ENCODE measurements at regions of chr7 and their contacts with region 1.

Region 1: DNA sequence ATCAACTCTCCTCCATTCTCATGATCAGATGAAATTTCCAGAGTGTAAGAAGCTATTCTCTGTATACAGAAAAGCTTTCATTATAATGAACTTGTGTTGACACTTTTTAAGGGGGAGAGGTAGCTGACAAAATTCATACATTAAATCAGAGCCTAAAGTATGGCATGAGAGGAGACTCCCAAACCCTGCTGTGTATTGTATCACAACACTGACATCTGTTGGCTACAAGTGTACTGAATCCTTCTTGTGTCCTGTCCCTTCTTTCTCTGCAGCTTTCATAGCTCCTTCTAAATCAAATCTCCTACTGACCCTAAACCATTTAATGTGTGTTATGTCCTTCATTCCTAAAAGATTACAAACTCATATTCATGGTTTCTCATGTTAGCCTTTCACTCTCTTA is 70.9 kb downstream of the GCC1 start:
- DNase-seq: peak in 4 of 14 experiments; percentile 12 to 71 (median 58)
- ATAC-seq: peak; percentile 68
- H3K4me3 ChIP-seq: no peak overlapping the region
- H3K4me3 Mint-ChIP-seq: no peak overlapping the region
- H3K27ac ChIP-seq: no peak overlapping the region
- H3K27ac Mint-ChIP-seq: no peak overlapping the region
- H3K4me1 ChIP-seq: no peaks in the 10 kb centered on the region
- H3K4me1 Mint-ChIP-seq: no peaks in the 10 kb centered on the region
- H3K27me3 ChIP-seq: peaks cover 0 to 5% of the 10 kb centered on the region in 2 experiments
- H3K27me3 Mint-ChIP-seq: peaks cover 37% of the 10 kb centered on the region
- CTCF ChIP-seq: peak; percentile 60

Region 2: GRCh38 chr7:126803060-126803665 is 711.3 kb before region 1 on chr7:
- CTCF ChIA-PET with region 1: interaction called, 3 read pairs
- POLR2A ChIA-PET with region 1: no interaction called
- intact Hi-C with region 1: loop called in 1 of 2 experiments (anchors 2 kb)
- DNase-seq: peak in 7 of 14 experiments; percentile 0 to 50 (median 15)
- ATAC-seq: peak; percentile 29
- H3K4me3 ChIP-seq: no peak overlapping the region
- H3K4me3 Mint-ChIP-seq: no peak overlapping the region
- H3K27ac ChIP-seq: no peak overlapping the region
- H3K27ac Mint-ChIP-seq: no peak overlapping the region
- H3K4me1 ChIP-seq: no peaks in the 10 kb centered on the region
- H3K4me1 Mint-ChIP-seq: no peaks in the 10 kb centered on the region
- H3K27me3 ChIP-seq: peaks cover 0 to 6% of the 10 kb centered on the region in 2 experiments
- H3K27me3 Mint-ChIP-seq: peaks cover 26% of the 10 kb centered on the region
- CTCF ChIP-seq: peak; percentile 57

Region 3: GRCh38 chr7:127253281-127254162 is 261.0 kb before region 1 on chr7:
- CTCF ChIA-PET with region 1: no interaction called
- POLR2A ChIA-PET with region 1: no interaction called
- intact Hi-C with region 1: loop called in 1 of 2 experiments (anchors 2 kb)
- DNase-seq: peak; percentile 20 to 71 (median 47)
- ATAC-seq: peak; percentile 81
- H3K4me3 ChIP-seq: peak overlapping the region; percentile 70
- H3K4me3 Mint-ChIP-seq: peak overlapping the region; percentile 91
- H3K27ac ChIP-seq: no peak overlapping the region
- H3K27ac Mint-ChIP-seq: no peak overlapping the region
- H3K4me1 ChIP-seq: peaks cover 33% of the 10 kb centered on the region
- H3K4me1 Mint-ChIP-seq: peaks cover 31% of the 10 kb centered on the region
- H3K27me3 ChIP-seq: peaks cover 45 to 79% of the 10 kb centered on the region in 2 experiments
- H3K27me3 Mint-ChIP-seq: peaks cover 85% of the 10 kb centered on the region
- CTCF ChIP-seq: peak; percentile 92

Region 4: GRCh38 chr7:127347567-127348246 is 166.8 kb before region 1 on chr7:
- CTCF ChIA-PET with region 1: interaction called, 10 read pairs
- POLR2A ChIA-PET with region 1: interaction called, 18 read pairs
- intact Hi-C with region 1: loop called (anchors 1 kb)
- DNase-seq: peak; percentile 48 to 90 (median 68)
- ATAC-seq: peak; percentile 99
- H3K4me3 ChIP-seq: peak overlapping the region; percentile 38
- H3K4me3 Mint-ChIP-seq: peak overlapping the region; percentile 36
- H3K27ac ChIP-seq: no peak overlapping the region
- H3K27ac Mint-ChIP-seq: no peak overlapping the region
- H3K4me1 ChIP-seq: peaks cover 7% of the 10 kb centered on the region
- H3K4me1 Mint-ChIP-seq: peaks cover 36% of the 10 kb centered on the region
- H3K27me3 ChIP-seq: no peaks in the 10 kb centered on the region
- H3K27me3 Mint-ChIP-seq: no peaks in the 10 kb centered on the region
- CTCF ChIP-seq: peak; percentile 42

Region 5: DNA sequence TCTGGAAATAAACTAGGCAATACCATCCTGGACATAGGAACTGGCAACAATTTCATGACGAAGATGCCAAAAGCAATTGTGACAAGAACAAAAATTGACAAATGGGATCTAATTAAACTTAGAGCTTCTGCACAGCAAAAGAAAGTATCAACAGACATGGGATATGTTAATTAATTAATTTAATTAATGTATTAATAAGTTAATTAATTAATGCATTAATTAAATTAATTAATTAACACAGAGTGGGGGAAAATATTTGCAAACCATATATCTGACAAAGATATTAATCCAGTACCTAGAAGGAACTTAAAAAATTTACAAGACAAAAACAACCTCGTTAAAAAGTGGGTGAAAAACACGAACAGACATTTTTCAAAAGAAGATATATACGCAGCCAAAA is 12.7 kb before region 1 on chr7:
- CTCF ChIA-PET with region 1: interaction called, 10 read pairs
- POLR2A ChIA-PET with region 1: no interaction called
- intact Hi-C with region 1: no loop called
- DNase-seq: no peak
- ATAC-seq: no peak
- H3K4me3 ChIP-seq: no peak overlapping the region
- H3K4me3 Mint-ChIP-seq: no peak overlapping the region
- H3K27ac ChIP-seq: no peak overlapping the region
- H3K27ac Mint-ChIP-seq: no peak overlapping the region
- H3K4me1 ChIP-seq: no peaks in the 10 kb centered on the region
- H3K4me1 Mint-ChIP-seq: no peaks in the 10 kb centered on the region
- H3K27me3 ChIP-seq: no peaks in the 10 kb centered on the region
- H3K27me3 Mint-ChIP-seq: peaks cover 37% of the 10 kb centered on the region
- CTCF ChIP-seq: no peak

Region 6: GRCh38 chr7:127943541-127944521 is 429.3 kb after region 1 on chr7:
- CTCF ChIA-PET with region 1: no interaction called
- POLR2A ChIA-PET with region 1: no interaction called
- intact Hi-C with region 1: no loop called
- DNase-seq: no peak
- ATAC-seq: no peak
- H3K4me3 ChIP-seq: no peak overlapping the region
- H3K4me3 Mint-ChIP-seq: no peak overlapping the region
- H3K27ac ChIP-seq: no peak overlapping the region
- H3K27ac Mint-ChIP-seq: no peak overlapping the region
- H3K4me1 ChIP-seq: no peaks in the 10 kb centered on the region
- H3K4me1 Mint-ChIP-seq: peaks cover 11% of the 10 kb centered on the region
- H3K27me3 ChIP-seq: no peaks in the 10 kb centered on the region
- H3K27me3 Mint-ChIP-seq: no peaks in the 10 kb centered on the region
- CTCF ChIP-seq: no peak